ENCODE measurements at regions of chr17 and their contacts with region 1.

Region 1: DNA sequence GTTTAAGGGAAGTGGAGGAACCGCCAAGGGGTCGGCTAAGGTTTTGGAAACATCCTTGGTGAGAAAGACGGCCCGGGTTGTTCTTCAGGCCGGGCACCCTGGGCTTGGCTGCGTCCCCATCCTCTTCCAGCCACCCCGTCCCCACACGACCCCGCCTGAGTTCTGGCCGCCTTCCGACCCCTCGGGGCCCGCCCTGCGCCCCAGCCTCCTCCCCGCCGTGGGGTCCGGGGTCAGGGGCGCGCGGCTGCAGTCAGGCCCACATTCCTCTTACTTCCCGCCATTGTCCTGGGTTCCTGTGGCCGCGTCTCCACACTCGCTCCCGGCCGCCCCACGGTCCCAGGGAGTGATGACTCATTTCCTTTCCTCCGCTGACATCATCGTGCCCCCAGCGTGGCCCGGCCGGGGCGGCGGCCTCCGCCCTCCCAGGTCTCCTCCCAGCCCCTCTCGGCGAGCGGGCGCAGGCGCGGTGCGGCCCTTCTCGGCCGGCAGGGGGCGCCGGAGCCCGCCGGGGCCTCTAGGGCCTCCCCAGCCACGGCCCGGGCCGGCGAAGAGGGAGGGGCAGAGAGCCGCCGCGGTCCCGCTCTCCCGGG is 59.6 kb downstream of the WSB1 start:
- DNase-seq: peak; percentile 78
- ATAC-seq: peak; percentile 74
- H3K4me3 ChIP-seq: peak overlapping the region; percentile 85 to 95
- H3K27ac ChIP-seq: peak overlapping the region; percentile 93
- H3K4me1 ChIP-seq: peaks cover 24 to 48% of the 10 kb centered on the region in 2 experiments
- H3K27me3 ChIP-seq: no peaks in the 10 kb centered on the region
- CTCF ChIP-seq: peak; percentile 58 to 85 (median 73)
- POLR2A ChIP-seq: peak; percentile 43
- RAD21 ChIP-seq: peak; percentile 70

Region 2: GRCh38 chr17:27381007-27381501 is 27.5 kb after region 1 on chr17:
- CTCF ChIA-PET with region 1: interaction called, 10 read pairs
- POLR2A ChIA-PET with region 1: no interaction called
- RAD21 ChIA-PET with region 1: no interaction called
- intact Hi-C with region 1: loop called (anchors 1 kb)
- DNase-seq: peak; percentile 74
- ATAC-seq: peak; percentile 92
- H3K4me3 ChIP-seq: peak overlapping the region; percentile 13 to 35; a peak in 3 of 4 replicates
- H3K27ac ChIP-seq: no peak overlapping the region; the same call in 1 of the 2 replicates
- H3K4me1 ChIP-seq: peaks cover 11 to 38% of the 10 kb centered on the region in 2 experiments; a peak in 3 of 4 replicates
- H3K27me3 ChIP-seq: no peaks in the 10 kb centered on the region
- CTCF ChIP-seq: peak; percentile 100
- POLR2A ChIP-seq: no peak
- RAD21 ChIP-seq: peak; percentile 68

Region 3: DNA sequence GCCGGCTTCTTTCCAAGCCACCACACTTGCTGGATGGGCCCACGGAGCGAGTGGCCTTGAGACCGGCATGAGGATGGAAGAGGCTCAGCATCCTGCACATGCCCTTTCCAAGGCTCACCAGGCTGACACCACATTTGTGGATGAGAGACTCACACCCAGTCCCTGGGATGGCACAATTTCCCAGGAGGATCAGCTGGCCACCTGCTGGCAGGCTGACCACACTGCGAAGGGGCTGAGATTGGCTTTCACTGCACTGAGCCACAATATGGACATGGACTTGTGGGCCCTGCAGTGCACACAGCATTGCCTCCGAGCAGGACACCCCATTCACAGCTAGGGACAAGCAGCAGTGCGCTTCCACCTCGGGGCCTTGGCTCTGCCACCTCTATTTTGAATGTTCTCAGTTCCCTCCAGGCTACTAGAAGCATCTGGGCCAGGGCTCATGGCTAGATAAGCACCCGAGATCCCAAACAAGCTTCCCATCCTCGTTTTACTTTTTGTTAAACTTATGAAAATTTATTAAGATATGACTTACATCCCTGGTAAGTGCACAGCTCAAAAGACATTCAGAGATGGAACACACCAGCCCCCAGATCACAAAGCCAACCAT is 77.4 kb after region 1 on chr17:
- CTCF ChIA-PET with region 1: interaction called, 5 read pairs
- POLR2A ChIA-PET with region 1: no interaction called
- RAD21 ChIA-PET with region 1: no interaction called
- intact Hi-C with region 1: loop called (anchors 2 kb)
- DNase-seq: peak; percentile 28
- ATAC-seq: peak; percentile 99
- H3K4me3 ChIP-seq: no peak overlapping the region
- H3K27ac ChIP-seq: no peak overlapping the region
- H3K4me1 ChIP-seq: no peaks in the 10 kb centered on the region
- H3K27me3 ChIP-seq: no peaks in the 10 kb centered on the region
- CTCF ChIP-seq: peak; percentile 59 to 81 (median 66); a peak in 5 of 6 replicates
- POLR2A ChIP-seq: no peak
- RAD21 ChIP-seq: peak; percentile 66